ENCODE measurements at regions of chr1 and their contacts with region 1.

Region 1: GRCh38 chr1:33036526-33037503 is at the start of gene AK2:
- DNase-seq: peak; percentile 95
- H3K4me3 ChIP-seq: peak within 1 kb of the TSS; percentile 77 to 90 (median 79)
- H3K27ac ChIP-seq: peak within 1 kb of the TSS; percentile 87 to 89
- H3K4me1 ChIP-seq: peaks cover 6 to 17% of the 10 kb centered on the region in 2 donors
- H3K27me3 ChIP-seq: no peaks in the 10 kb centered on the region
- CTCF ChIP-seq: no peak
- POLR2A ChIP-seq: peak; percentile 71
- total RNA-seq, gene AK2: 124 to 483 (median 280) TPM

Region 2: GRCh38 chr1:32997381-32997891 is 39.4 kb before region 1 on chr1:
- intact Hi-C with region 1: no loop called
- DNase-seq: no peak
- H3K4me3 ChIP-seq: no peak overlapping the region
- H3K27ac ChIP-seq: peak overlapping the region; percentile 40 to 70
- H3K4me1 ChIP-seq: peaks cover 0 to under 1% of the 10 kb centered on the region in 2 donors
- H3K27me3 ChIP-seq: no peaks in the 10 kb centered on the region
- CTCF ChIP-seq: no peak
- POLR2A ChIP-seq: no peak

Region 3: DNA sequence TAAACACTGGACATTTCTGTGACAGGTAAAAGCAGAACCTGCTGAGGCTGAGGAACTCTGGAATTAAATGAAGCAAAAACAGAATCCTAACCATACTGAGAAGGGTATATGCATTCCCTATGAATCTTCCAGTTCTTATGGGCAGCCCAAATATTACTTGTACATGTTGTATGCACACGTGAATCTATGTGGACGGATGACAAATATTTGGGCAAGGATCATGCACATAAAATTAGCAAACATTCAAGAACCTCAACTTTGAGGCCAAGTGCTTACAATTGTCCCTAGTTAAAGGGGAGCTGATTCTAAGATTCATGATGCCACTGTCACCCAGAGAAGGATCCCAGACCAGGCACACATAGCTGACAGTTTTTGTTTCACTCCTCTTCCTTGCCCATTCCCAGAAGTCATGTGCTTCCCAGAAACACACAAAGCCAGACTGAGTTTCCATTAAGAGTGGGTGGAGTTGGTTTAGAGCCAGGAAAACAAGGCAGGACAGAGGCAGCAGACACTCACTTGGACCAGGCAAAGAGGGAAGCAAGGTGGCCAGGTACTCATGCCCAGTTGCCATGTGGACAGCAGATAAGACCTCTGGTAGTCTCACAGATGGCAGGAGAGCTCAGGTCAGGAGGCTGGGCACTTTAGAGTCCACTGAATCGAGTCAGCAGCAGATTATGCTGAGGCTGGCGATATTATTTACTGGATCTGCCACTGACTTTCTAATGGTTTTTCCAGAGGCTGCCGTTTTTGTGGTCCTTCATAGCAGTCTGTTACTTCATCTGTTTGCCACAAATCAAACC is 25.7 kb before region 1 on chr1:
- intact Hi-C with region 1: loop called (anchors 1 kb)
- DNase-seq: peak in 1 of 2 donors; percentile 70
- H3K4me3 ChIP-seq: peak overlapping the region in 1 of 3 donors; percentile 19
- H3K27ac ChIP-seq: peak overlapping the region; percentile 88 to 95
- H3K4me1 ChIP-seq: peaks cover 0 to 36% of the 10 kb centered on the region in 2 donors
- H3K27me3 ChIP-seq: no peaks in the 10 kb centered on the region
- CTCF ChIP-seq: no peak
- POLR2A ChIP-seq: no peak